ENCODE measurements at regions of chr5 and their contacts with region 1.

Region 1: DNA sequence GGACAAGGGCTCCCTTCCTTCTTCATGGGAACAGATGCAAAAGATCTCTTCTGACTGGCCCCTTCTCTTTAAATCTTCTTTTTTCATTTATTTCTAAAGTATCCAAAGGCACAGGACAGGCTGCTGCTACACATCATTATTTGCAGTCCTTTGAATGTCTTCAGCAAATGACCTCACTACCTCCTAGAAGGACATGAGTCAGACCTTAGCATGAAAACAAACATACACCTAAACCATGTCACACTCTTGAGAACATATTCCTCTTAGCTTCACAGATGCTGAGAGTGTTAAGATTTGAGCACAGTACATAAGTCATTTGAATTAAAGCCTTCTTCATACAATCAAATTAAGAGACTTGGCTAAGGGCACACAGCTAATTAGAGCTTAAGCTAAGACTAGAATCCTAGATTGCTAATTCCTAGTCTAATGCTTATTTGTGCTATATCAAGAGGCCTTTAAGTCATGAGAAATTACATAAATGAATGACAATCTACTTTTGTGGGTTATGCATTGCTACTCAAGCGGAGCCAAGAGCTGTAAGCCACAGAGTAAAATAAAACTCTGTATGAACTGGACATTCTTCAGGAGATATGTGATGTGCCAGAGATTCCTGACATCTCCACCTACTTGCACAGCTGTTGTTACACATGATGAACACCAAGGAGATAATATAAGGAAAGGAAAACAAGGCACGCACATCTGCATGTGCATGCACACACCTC is 109.1 kb upstream of the PTGER4 start:
- DNase-seq: peak; percentile 26
- ATAC-seq: peak; percentile 89
- H3K4me3 ChIP-seq: no peak overlapping the region
- H3K27ac ChIP-seq: no peak overlapping the region
- H3K4me1 ChIP-seq: peaks cover 14% of the 10 kb centered on the region
- H3K27me3 ChIP-seq: no peaks in the 10 kb centered on the region; a peak in 2 of 4 replicates
- CTCF ChIP-seq: no peak
- EP300 ChIP-seq: no peak
- POLR2A ChIP-seq: no peak
- RAD21 ChIP-seq: no peak

Region 2: DNA sequence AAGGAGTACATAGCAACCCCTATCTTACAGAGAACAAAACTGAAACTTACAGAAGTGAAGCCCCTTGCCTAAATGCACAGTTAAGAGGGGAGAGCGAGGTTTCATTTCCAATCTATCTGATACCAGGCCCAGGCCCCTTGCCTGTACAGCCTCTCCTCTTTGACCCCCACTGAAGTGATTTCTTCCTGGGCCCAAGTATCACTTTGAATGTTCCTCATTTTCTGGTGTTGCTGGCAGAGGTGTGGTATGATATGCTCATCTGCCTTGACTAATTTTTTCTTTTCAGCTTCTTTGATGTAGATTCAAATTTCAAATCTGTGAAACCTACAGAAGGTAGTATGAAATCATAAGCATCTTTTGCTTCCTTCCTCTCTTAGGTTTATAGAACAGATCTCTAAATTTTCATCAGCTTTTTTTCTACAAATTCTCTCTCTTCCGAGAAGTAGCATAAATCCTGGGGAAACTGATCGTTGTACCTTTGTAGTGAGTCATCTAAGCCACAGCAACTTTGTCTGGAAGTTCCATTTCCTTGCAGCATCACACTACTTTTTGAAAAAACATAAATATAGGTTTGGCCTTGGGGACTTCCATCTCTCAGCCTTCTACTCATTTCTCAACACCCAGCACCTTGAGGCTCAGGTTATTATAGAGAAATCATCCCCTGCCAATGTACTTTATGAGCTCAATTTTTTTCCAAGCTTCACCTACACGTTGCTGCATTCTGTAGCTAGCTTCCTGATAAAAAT is 293.2 kb before region 1 on chr5:
- CTCF ChIA-PET with region 1: no interaction called
- POLR2A ChIA-PET with region 1: no interaction called
- RAD21 ChIA-PET with region 1: no interaction called
- SMC1A ChIA-PET with region 1: no interaction called
- in situ Hi-C with region 1: no loop called
- intact Hi-C with region 1: loop called (anchors 5 kb)
- DNase-seq: peak; percentile 34
- ATAC-seq: peak; percentile 91
- H3K4me3 ChIP-seq: no peak overlapping the region
- H3K27ac ChIP-seq: no peak overlapping the region
- H3K4me1 ChIP-seq: peaks cover 2% of the 10 kb centered on the region; the same call in 1 of the 2 replicates
- H3K27me3 ChIP-seq: peaks cover 2 to 3% of the 10 kb centered on the region in 2 experiments; a peak in 1 of 4 replicates
- CTCF ChIP-seq: no peak
- EP300 ChIP-seq: no peak
- POLR2A ChIP-seq: no peak
- RAD21 ChIP-seq: no peak

Region 3: GRCh38 chr5:40383749-40384651 is 186.6 kb before region 1 on chr5:
- CTCF ChIA-PET with region 1: no interaction called
- POLR2A ChIA-PET with region 1: no interaction called
- RAD21 ChIA-PET with region 1: no interaction called
- SMC1A ChIA-PET with region 1: no interaction called
- in situ Hi-C with region 1: no loop called
- intact Hi-C with region 1: no loop called
- DNase-seq: no peak
- ATAC-seq: peak; percentile 69
- H3K4me3 ChIP-seq: no peak overlapping the region
- H3K27ac ChIP-seq: no peak overlapping the region
- H3K4me1 ChIP-seq: peaks cover 26% of the 10 kb centered on the region
- H3K27me3 ChIP-seq: no peaks in the 10 kb centered on the region
- CTCF ChIP-seq: no peak
- EP300 ChIP-seq: no peak
- POLR2A ChIP-seq: no peak
- RAD21 ChIP-seq: no peak

Region 4: GRCh38 chr5:40605295-40605958 is 34.9 kb after region 1 on chr5:
- CTCF ChIA-PET with region 1: no interaction called
- POLR2A ChIA-PET with region 1: no interaction called
- RAD21 ChIA-PET with region 1: no interaction called
- SMC1A ChIA-PET with region 1: no interaction called
- in situ Hi-C with region 1: no loop called
- intact Hi-C with region 1: no loop called
- DNase-seq: no peak
- ATAC-seq: no peak
- H3K4me3 ChIP-seq: no peak overlapping the region
- H3K27ac ChIP-seq: no peak overlapping the region
- H3K4me1 ChIP-seq: no peaks in the 10 kb centered on the region
- H3K27me3 ChIP-seq: peaks cover 0 to 2% of the 10 kb centered on the region in 2 experiments; a peak in 2 of 4 replicates
- CTCF ChIP-seq: no peak
- EP300 ChIP-seq: no peak
- POLR2A ChIP-seq: no peak
- RAD21 ChIP-seq: no peak

Region 5: GRCh38 chr5:40652441-40653220 is 82.1 kb after region 1 on chr5:
- CTCF ChIA-PET with region 1: no interaction called
- POLR2A ChIA-PET with region 1: no interaction called
- RAD21 ChIA-PET with region 1: no interaction called
- SMC1A ChIA-PET with region 1: no interaction called
- in situ Hi-C with region 1: no loop called
- intact Hi-C with region 1: no loop called
- DNase-seq: no peak
- ATAC-seq: no peak
- H3K4me3 ChIP-seq: no peak overlapping the region
- H3K27ac ChIP-seq: no peak overlapping the region
- H3K4me1 ChIP-seq: peaks cover 6% of the 10 kb centered on the region
- H3K27me3 ChIP-seq: no peaks in the 10 kb centered on the region
- CTCF ChIP-seq: no peak
- EP300 ChIP-seq: no peak
- POLR2A ChIP-seq: no peak
- RAD21 ChIP-seq: no peak